GM12878 (cell line): ENCODE measurements at regions of chr6 and their contacts with region 1.

Region 1: GRCh38 chr6:88662163-88662580 is 301.2 kb downstream of the RNGTT start:
- DNase-seq: peak; percentile 89
- ATAC-seq: peak; percentile 88
- H3K4me3 ChIP-seq: no peak overlapping the region
- H3K27ac ChIP-seq: peak overlapping the region; percentile 39
- H3K4me1 ChIP-seq: peaks cover 17% of the 10 kb centered on the region
- H3K27me3 ChIP-seq: no peaks in the 10 kb centered on the region
- CTCF ChIP-seq: no peak
- EP300 ChIP-seq: peak in 1 of 2 experiments; percentile 69; a peak in 2 of 4 replicates
- POLR2A ChIP-seq: no peak
- RAD21 ChIP-seq: no peak

Region 2: DNA sequence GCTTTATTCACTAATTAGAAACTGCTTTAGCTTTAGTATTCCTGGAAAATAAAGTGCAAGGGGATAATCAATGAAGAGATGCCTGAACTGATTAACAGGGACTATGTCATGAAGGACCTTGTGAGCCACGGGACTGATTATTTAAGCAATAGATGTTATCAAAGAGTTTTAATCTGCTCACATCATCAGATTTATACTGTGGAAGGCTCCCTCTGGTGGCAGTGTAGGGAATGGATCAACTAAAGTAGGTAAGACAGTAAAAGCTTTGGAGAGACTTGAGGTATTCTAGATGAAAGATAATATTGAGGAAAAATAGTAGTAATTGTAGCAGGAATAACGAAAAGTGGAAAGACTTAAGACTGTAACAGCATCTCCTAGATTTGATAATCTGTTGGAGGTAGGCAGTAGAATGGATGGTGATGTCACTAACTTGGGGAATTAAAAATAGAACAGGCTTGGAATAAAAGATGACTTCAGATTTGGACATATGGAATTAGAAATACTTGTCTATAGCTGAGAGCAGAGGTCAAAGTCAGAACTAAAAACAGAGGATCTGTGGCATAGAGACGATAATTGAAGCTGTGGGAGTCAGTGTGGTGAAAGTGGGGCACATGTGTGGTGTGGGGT is 1805.1 kb before region 1 on chr6:
- CTCF ChIA-PET with region 1: no interaction called
- POLR2A ChIA-PET with region 1: no interaction called
- RAD21 ChIA-PET with region 1: no interaction called
- SMC1A ChIA-PET with region 1: no interaction called
- in situ Hi-C with region 1: no loop called
- intact Hi-C with region 1: no loop called
- DNase-seq: no peak
- ATAC-seq: peak; percentile 67
- H3K4me3 ChIP-seq: no peak overlapping the region
- H3K27ac ChIP-seq: no peak overlapping the region
- H3K4me1 ChIP-seq: no peaks in the 10 kb centered on the region
- H3K27me3 ChIP-seq: no peaks in the 10 kb centered on the region
- CTCF ChIP-seq: peak; percentile 63 to 77 (median 67)
- EP300 ChIP-seq: no peak
- POLR2A ChIP-seq: no peak
- RAD21 ChIP-seq: peak; percentile 59

Region 3: GRCh38 chr6:88008831-88009231 is 653.3 kb before region 1 on chr6:
- CTCF ChIA-PET with region 1: no interaction called
- POLR2A ChIA-PET with region 1: no interaction called
- RAD21 ChIA-PET with region 1: no interaction called
- SMC1A ChIA-PET with region 1: no interaction called
- in situ Hi-C with region 1: no loop called
- intact Hi-C with region 1: no loop called
- DNase-seq: no peak
- ATAC-seq: no peak
- H3K4me3 ChIP-seq: no peak overlapping the region
- H3K27ac ChIP-seq: no peak overlapping the region
- H3K4me1 ChIP-seq: no peaks in the 10 kb centered on the region
- H3K27me3 ChIP-seq: no peaks in the 10 kb centered on the region
- CTCF ChIP-seq: no peak
- EP300 ChIP-seq: no peak
- POLR2A ChIP-seq: no peak
- RAD21 ChIP-seq: no peak

Region 4: GRCh38 chr6:88629838-88630494 is 32.2 kb before region 1 on chr6:
- CTCF ChIA-PET with region 1: interaction called, 3 read pairs
- POLR2A ChIA-PET with region 1: no interaction called
- RAD21 ChIA-PET with region 1: no interaction called
- SMC1A ChIA-PET with region 1: interaction called, 14 read pairs
- in situ Hi-C with region 1: no loop called
- intact Hi-C with region 1: no loop called
- DNase-seq: no peak
- ATAC-seq: peak; percentile 84
- H3K4me3 ChIP-seq: no peak overlapping the region
- H3K27ac ChIP-seq: no peak overlapping the region; the same call in 1 of the 2 replicates
- H3K4me1 ChIP-seq: peaks cover 7% of the 10 kb centered on the region; the same call in 1 of the 2 replicates
- H3K27me3 ChIP-seq: no peaks in the 10 kb centered on the region
- CTCF ChIP-seq: peak; percentile 14 to 28 (median 23); a peak in 3 of 6 replicates
- EP300 ChIP-seq: no peak
- POLR2A ChIP-seq: no peak
- RAD21 ChIP-seq: peak; percentile 39; the same call in 1 of the 2 replicates